ENCODE measurements at regions of chr4 and their contacts with region 1.

Region 1: DNA sequence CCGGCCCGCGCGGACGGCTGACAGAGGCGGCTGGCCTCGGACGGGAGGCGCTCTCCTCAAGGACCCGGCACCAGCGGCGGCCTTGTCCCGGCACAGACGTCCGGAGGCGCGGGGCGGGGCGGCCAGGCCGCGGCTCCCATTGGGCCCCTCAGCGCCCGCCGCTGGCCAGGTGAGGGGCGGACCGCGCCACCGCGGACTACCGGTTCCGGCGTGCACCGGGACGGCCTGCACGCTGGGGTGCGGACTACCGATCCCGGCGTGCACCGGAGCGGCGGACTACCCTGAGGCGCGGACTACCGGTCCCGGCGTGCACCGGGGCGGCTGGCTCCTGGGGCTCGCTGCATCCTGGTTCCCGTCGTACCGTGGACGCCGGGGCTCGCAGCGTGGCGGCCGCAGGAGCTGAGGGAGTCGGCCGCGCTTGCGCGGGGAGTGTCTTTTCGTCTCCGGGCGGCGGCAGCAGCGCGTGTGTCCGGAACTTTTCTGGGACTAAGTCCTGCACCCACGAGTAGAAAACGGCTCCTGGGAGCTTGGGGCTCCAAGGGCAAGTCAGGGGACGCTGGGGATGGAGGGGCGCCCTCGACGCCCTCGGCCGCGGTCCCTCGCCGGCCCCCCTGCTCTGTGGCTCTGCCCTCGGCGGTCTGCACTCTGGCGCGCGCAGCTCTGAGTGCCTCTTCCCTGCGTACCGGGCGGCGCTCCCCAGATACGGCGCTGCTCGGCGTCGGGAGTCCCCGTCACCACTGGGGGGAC is at the start of gene LETM1:
- DNase-seq: peak; percentile 84
- H3K4me3 ChIP-seq: peak within 1 kb of the TSS; percentile 82
- CTCF ChIP-seq: no peak

Region 2: DNA sequence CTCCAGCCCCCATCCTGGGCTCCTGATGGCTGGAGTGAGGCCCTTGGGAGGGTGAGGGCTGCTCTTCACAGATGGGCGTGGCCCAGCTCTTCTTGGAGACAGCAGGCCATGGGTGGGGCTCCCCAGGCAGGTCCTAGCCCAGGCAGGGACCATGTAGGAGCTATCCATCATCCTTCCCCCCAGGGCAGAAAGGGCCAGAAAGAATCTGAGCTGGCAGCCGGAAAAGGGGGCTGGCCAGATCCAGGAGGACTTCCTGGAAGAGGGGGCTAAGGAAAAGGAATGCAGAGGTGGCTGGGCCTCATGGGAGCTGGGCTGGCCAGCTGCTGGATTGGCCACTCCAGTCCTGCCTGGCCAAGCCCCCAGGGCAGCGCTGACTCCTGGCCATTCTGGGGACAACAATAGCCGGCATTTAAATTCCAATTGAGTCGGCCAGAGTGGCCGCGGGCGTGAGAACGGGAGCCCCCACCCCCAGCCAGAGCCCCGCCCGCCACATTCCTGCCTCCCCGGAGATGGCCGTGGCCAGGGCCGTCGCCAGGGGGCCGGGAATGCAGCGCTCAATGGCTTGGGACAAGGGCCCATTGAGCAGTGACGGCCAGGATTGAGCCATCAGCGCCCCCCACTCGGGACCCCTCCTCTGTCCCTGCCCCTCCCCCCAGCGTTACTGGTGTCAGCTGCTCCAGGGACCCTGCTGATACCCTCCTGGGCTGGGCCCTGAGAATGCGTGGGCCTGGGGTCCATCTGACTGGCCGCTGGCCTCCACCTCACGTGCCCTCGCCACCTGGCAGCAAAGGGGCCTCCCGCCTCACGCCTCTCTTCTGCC is 78.2 kb before region 1 on chr4:
- in situ Hi-C with region 1: no loop called
- DNase-seq: peak; percentile 3
- H3K4me3 ChIP-seq: no peak overlapping the region
- CTCF ChIP-seq: no peak

Region 3: DNA sequence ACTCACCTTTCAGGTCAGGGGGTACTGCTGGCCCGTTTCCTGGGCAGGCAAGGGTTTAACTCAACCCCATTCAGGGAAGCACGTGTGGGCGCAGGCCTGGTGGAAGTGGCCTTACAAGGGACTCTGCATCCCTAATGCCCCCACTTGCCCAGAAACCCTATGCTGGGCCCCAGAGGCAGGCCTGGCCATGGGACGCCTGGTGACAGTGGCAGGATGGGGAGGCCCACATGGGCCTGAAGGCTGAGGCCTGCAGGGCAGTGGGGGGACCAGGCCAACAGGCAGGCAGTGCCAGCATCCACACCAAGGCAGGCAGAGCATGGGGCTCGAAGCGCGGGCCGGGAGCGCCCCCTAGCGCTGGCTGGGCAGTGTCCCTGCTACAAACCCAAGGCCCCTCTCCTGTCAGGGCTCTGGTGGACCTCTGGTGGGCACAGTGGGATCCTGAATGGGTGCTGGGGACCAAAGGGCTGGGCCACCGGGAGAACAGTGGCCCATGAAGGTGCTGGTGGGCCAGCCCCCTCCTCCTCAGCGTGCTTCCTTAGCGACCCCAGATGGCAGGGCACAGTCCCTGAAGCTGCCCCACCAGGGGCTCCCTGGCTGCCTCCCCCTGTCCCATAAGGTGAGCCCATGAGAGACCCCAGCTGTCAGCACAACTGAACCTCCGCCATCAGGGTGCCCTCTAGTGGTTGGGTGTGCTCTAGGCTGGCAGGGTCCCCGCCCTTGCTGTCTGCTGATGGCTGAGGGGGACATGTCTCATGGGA is 46.3 kb before region 1 on chr4:
- in situ Hi-C with region 1: loop called (anchors 5 kb)
- DNase-seq: no peak
- H3K4me3 ChIP-seq: no peak overlapping the region
- CTCF ChIP-seq: peak; percentile 87